WTC11 (cell line): ENCODE measurements at regions of chr9 and their contacts with region 1.

Region 1: GRCh38 chr9:9942764-9943424 is 669.9 kb downstream of the PTPRD start:
- DNase-seq: peak; percentile 76
- ATAC-seq: peak; percentile 93
- H3K4me3 Mint-ChIP-seq: no peak overlapping the region
- H3K27ac Mint-ChIP-seq: no peak overlapping the region
- H3K4me1 Mint-ChIP-seq: peaks cover 9% of the 10 kb centered on the region
- H3K27me3 Mint-ChIP-seq: no peaks in the 10 kb centered on the region; the same call in 1 of the 2 replicates
- CTCF ChIP-seq: peak; percentile 77

Region 2: GRCh38 chr9:9605681-9606080 is 337.2 kb before region 1 on chr9:
- CTCF ChIA-PET with region 1: interaction called, 36 read pairs
- POLR2A ChIA-PET with region 1: no interaction called
- DNase-seq: no peak
- ATAC-seq: no peak
- H3K4me3 Mint-ChIP-seq: no peak overlapping the region
- H3K27ac Mint-ChIP-seq: no peak overlapping the region
- H3K4me1 Mint-ChIP-seq: peaks cover 25% of the 10 kb centered on the region
- H3K27me3 Mint-ChIP-seq: no peaks in the 10 kb centered on the region
- CTCF ChIP-seq: no peak

Region 3: DNA sequence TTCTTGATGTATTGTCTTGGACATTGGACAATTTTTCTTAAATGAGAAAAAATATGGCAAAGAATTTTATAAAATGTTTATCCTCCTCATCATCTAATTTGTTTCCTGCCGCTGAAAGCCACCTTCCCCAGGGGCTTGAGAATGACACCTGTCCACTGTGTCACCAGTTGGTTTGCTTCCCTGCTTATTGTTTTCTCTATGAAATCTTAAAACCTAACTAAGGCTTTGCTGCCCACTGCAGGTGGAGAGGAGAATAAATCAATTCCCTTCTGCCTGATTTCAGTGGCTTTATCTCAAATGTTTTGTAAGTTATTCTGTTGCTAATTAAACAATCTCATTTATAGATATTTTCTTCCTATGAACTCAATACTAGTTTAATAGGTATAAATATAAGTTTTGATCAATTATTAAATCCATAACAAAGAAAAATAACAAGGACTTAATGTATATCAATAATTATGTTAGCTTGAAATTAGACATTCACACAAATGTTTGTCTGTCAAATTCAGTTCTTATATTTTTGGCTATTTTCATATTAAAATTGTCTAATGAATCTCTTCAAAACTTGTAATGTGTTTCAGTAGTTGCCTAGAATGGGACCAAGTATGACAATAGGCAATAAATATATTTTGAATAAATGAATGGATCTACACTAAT is 152.6 kb before region 1 on chr9:
- CTCF ChIA-PET with region 1: interaction called, 38 read pairs
- POLR2A ChIA-PET with region 1: no interaction called
- DNase-seq: peak; percentile 26
- ATAC-seq: peak; percentile 46
- H3K4me3 Mint-ChIP-seq: no peak overlapping the region
- H3K27ac Mint-ChIP-seq: no peak overlapping the region
- H3K4me1 Mint-ChIP-seq: no peaks in the 10 kb centered on the region
- H3K27me3 Mint-ChIP-seq: no peaks in the 10 kb centered on the region
- CTCF ChIP-seq: peak; percentile 63; the same call in 1 of the 2 replicates

Region 4: DNA sequence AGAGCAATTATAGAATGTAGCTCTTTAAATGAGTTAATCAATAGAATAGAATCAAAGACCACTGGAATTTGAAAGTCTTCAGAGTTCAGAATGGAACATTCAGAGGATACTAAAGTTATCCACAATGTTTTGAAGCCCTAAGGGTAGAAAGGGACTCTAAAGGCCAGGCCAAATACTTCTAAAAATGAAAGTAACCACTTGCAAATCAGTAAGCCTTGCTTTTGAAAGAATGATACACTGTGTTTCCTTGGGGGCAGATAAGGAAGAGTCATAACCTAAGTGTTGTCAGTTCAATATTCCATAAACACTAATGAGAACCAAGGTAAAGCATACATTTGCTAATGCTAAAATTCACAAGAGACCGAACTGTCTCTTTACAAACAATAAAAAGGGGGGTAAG is 143.6 kb before region 1 on chr9:
- CTCF ChIA-PET with region 1: interaction called, 18 read pairs
- POLR2A ChIA-PET with region 1: no interaction called
- DNase-seq: no peak
- ATAC-seq: no peak
- H3K4me3 Mint-ChIP-seq: no peak overlapping the region
- H3K27ac Mint-ChIP-seq: no peak overlapping the region
- H3K4me1 Mint-ChIP-seq: peaks cover 21% of the 10 kb centered on the region
- H3K27me3 Mint-ChIP-seq: no peaks in the 10 kb centered on the region
- CTCF ChIP-seq: no peak

Region 5: GRCh38 chr9:9912459-9912858 is 30.4 kb before region 1 on chr9:
- CTCF ChIA-PET with region 1: interaction called, 28 read pairs
- POLR2A ChIA-PET with region 1: no interaction called
- DNase-seq: no peak
- ATAC-seq: no peak
- H3K4me3 Mint-ChIP-seq: no peak overlapping the region
- H3K27ac Mint-ChIP-seq: no peak overlapping the region
- H3K4me1 Mint-ChIP-seq: peaks cover 11% of the 10 kb centered on the region
- H3K27me3 Mint-ChIP-seq: no peaks in the 10 kb centered on the region
- CTCF ChIP-seq: no peak

Region 6: GRCh38 chr9:9920425-9921060 is 22.4 kb before region 1 on chr9:
- CTCF ChIA-PET with region 1: interaction called, 35 read pairs
- POLR2A ChIA-PET with region 1: no interaction called
- DNase-seq: no peak
- ATAC-seq: peak; percentile 90
- H3K4me3 Mint-ChIP-seq: no peak overlapping the region
- H3K27ac Mint-ChIP-seq: no peak overlapping the region
- H3K4me1 Mint-ChIP-seq: peaks cover 10% of the 10 kb centered on the region
- H3K27me3 Mint-ChIP-seq: no peaks in the 10 kb centered on the region
- CTCF ChIP-seq: 0 out of 2 replicates have a peak, but pooled peaks have one; percentile 26

Region 7: DNA sequence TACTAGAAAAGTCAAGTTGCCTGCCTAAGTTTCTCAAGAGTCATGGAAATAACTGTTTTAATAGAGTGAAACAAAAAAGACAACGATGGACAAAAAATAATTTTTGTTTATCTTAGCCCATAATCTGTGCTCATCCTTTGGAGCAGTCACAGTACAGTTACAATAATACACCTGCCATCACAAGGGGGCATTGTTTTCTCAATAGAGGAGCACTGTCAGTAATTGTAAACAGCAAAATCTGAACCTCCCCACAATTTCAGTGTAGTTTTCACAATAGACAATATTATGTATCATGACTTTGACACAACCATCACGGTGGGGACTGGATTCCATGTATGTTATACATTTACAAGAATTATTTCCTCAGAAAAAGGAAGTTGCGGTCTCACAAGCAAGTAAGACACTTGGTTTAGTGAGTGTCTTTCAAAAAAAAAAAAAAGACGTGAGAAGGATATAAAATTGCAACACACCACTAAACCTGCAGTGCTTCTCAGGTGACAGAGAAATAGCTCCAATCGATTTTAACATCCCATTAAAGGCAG is 83.6 kb after region 1 on chr9:
- CTCF ChIA-PET with region 1: no interaction called
- POLR2A ChIA-PET with region 1: no interaction called
- DNase-seq: no peak
- ATAC-seq: no peak
- H3K4me3 Mint-ChIP-seq: no peak overlapping the region
- H3K27ac Mint-ChIP-seq: no peak overlapping the region
- H3K4me1 Mint-ChIP-seq: no peaks in the 10 kb centered on the region
- H3K27me3 Mint-ChIP-seq: no peaks in the 10 kb centered on the region
- CTCF ChIP-seq: no peak

Region 8: DNA sequence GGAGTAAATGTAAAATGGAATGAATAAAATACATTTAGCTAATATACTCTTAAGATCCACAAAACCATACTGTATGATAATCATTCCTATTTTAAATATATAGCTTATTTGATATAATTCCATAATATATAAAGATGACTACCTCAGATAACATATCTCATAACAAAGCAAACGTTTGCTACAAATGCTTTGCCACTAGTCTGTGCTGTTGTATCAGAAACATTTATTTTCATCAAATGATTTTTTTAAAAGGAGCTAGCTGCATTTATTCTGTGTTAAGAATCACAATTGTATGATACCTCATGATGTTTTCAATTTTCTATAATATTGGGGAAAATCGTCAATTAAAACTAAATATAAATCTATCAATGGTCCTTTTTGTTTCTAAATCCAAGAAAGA is 102.7 kb after region 1 on chr9:
- CTCF ChIA-PET with region 1: no interaction called
- POLR2A ChIA-PET with region 1: no interaction called
- DNase-seq: no peak
- ATAC-seq: no peak
- H3K4me3 Mint-ChIP-seq: no peak overlapping the region
- H3K27ac Mint-ChIP-seq: no peak overlapping the region
- H3K4me1 Mint-ChIP-seq: peaks cover 3% of the 10 kb centered on the region; the same call in 1 of the 2 replicates
- H3K27me3 Mint-ChIP-seq: no peaks in the 10 kb centered on the region
- CTCF ChIP-seq: no peak